K562 (cell line): ENCODE measurements at regions of chr3 and their contacts with region 1.

Region 1: GRCh38 chr3:39166932-39167532 is 13.6 kb upstream of the CSRNP1 start:
- DNase-seq: no peak
- ATAC-seq: no peak
- H3K4me3 ChIP-seq: no peak overlapping the region
- H3K27ac ChIP-seq: no peak overlapping the region
- H3K4me1 ChIP-seq: peaks cover 0 to 24% of the 10 kb centered on the region in 2 experiments; a peak in 4 of 5 replicates
- H3K27me3 ChIP-seq: no peaks in the 10 kb centered on the region
- CTCF ChIP-seq: no peak
- EP300 ChIP-seq: no peak
- POLR2A ChIP-seq: no peak
- RAD21 ChIP-seq: no peak

Region 2: DNA sequence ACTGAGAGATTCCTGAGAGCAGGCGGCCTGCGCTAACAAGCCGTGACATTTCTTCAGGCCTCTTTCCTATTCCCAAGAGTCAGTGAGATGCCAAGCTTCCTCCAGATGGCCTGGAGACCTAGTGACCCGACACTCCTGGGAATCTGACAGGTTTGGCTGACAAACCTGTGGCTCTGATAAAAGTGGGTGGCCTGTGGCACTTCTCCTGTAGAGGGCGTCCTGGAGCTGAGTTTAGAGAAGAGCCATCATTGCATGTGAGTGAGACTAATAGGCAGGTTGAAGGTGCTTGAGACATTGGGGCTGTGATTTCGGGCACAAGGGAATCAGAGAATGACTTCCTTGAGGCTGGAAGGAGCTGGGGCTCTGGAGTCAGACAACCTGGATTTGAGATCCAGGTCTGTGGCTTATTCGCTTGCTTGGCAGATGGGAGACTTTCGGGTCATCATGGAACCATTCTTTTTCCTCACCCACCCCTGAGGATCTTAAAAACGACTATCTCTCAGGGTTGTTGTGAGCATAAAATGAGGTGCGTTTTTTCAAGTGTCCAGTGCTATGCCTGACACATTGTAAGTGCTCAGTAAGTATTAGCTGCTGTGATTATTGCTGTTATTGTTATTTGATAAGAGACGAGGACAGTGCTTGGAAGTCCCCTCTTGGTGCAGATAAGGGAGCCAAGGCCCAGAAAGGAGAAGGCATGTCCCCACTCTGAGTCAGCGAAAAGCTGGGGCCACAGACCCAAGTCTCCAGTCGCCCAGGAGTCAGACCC is 428.2 kb before region 1 on chr3:
- CTCF ChIA-PET with region 1: no interaction called
- POLR2A ChIA-PET with region 1: no interaction called
- in situ Hi-C with region 1: no loop called
- intact Hi-C with region 1: no loop called
- DNase-seq: peak; percentile 67 to 75 (median 68)
- ATAC-seq: peak; percentile 92
- H3K4me3 ChIP-seq: no peak overlapping the region
- H3K27ac ChIP-seq: no peak overlapping the region
- H3K4me1 ChIP-seq: peaks cover 4 to 11% of the 10 kb centered on the region in 2 experiments; a peak in 3 of 5 replicates
- H3K27me3 ChIP-seq: peaks cover 2 to 8% of the 10 kb centered on the region in 2 experiments; a peak in 4 of 5 replicates
- CTCF ChIP-seq: peak; percentile 77 to 84 (median 84)
- EP300 ChIP-seq: no peak
- POLR2A ChIP-seq: no peak
- RAD21 ChIP-seq: peak; percentile 45 to 74

Region 3: GRCh38 chr3:39177708-39178332 is 10.8 kb after region 1 on chr3:
- CTCF ChIA-PET with region 1: no interaction called
- POLR2A ChIA-PET with region 1: interaction called, 10 read pairs
- in situ Hi-C with region 1: no loop called
- intact Hi-C with region 1: no loop called
- DNase-seq: peak; percentile 84 to 97 (median 90)
- ATAC-seq: peak; percentile 52
- H3K4me3 ChIP-seq: peak overlapping the region; percentile 51
- H3K27ac ChIP-seq: peak overlapping the region; percentile 83
- H3K4me1 ChIP-seq: peaks cover 49 to 56% of the 10 kb centered on the region in 2 experiments
- H3K27me3 ChIP-seq: no peaks in the 10 kb centered on the region
- CTCF ChIP-seq: no peak
- EP300 ChIP-seq: peak; percentile 71; the same call in 1 of the 2 replicates
- POLR2A ChIP-seq: peak; percentile 77
- RAD21 ChIP-seq: peak in 1 of 2 experiments; percentile 9; a peak in 1 of 4 replicates

Region 4: DNA sequence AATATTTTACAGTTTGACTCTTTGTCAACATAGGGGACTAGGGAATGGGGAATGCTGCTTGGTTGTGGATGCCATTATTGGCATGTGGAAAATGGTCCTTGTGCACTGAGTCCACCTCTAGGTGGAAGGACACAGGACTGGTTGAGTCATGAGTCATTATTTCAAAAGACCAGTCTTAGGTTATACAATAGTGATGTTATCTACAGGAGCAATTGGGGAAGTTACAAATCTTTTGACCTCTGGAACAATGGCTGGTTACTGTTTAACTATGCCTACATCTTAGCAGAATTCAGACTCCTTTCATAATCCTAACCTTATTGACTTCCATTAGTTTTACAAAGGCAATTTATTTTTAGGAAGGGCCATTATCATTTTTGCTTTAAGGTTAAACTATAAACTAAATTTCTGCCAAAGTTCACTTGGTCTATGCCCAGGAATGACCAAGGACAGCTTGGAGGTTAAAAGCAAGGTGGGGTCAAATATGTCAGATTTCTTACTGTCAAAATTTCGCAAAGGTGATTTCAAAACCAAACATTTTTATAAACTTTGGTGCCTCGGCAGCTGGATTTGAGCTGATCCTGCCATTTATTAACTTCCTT is 150.6 kb after region 1 on chr3:
- CTCF ChIA-PET with region 1: no interaction called
- POLR2A ChIA-PET with region 1: no interaction called
- in situ Hi-C with region 1: no loop called
- intact Hi-C with region 1: no loop called
- DNase-seq: no peak
- ATAC-seq: peak; percentile 47; the same call in 2 of the 3 replicates
- H3K4me3 ChIP-seq: no peak overlapping the region
- H3K27ac ChIP-seq: no peak overlapping the region
- H3K4me1 ChIP-seq: peaks cover 0 to 4% of the 10 kb centered on the region in 2 experiments; a peak in 1 of 5 replicates
- H3K27me3 ChIP-seq: no peaks in the 10 kb centered on the region
- CTCF ChIP-seq: no peak
- EP300 ChIP-seq: no peak
- POLR2A ChIP-seq: no peak
- RAD21 ChIP-seq: 0 out of 4 replicates have a peak, but pooled peaks of 1 of the 2 experiments have one; percentile 18

Region 5: GRCh38 chr3:39361252-39361927 is 194.4 kb after region 1 on chr3:
- CTCF ChIA-PET with region 1: no interaction called
- POLR2A ChIA-PET with region 1: no interaction called
- in situ Hi-C with region 1: no loop called
- intact Hi-C with region 1: no loop called
- DNase-seq: no peak
- ATAC-seq: peak; percentile 45; the same call in 2 of the 3 replicates
- H3K4me3 ChIP-seq: no peak overlapping the region
- H3K27ac ChIP-seq: no peak overlapping the region
- H3K4me1 ChIP-seq: peaks cover 0 to 11% of the 10 kb centered on the region in 2 experiments; a peak in 2 of 5 replicates
- H3K27me3 ChIP-seq: peaks cover 0 to 13% of the 10 kb centered on the region in 2 experiments
- CTCF ChIP-seq: no peak
- EP300 ChIP-seq: no peak
- POLR2A ChIP-seq: no peak
- RAD21 ChIP-seq: no peak

Region 6: GRCh38 chr3:40224796-40225515 is 1057.9 kb after region 1 on chr3:
- CTCF ChIA-PET with region 1: no interaction called
- POLR2A ChIA-PET with region 1: no interaction called
- in situ Hi-C with region 1: no loop called
- intact Hi-C with region 1: no loop called
- DNase-seq: no peak
- ATAC-seq: no peak
- H3K4me3 ChIP-seq: no peak overlapping the region
- H3K27ac ChIP-seq: no peak overlapping the region
- H3K4me1 ChIP-seq: no peaks in the 10 kb centered on the region
- H3K27me3 ChIP-seq: peaks cover 6 to 30% of the 10 kb centered on the region in 2 experiments; a peak in 2 of 5 replicates
- CTCF ChIP-seq: no peak
- EP300 ChIP-seq: no peak
- POLR2A ChIP-seq: no peak
- RAD21 ChIP-seq: no peak